ENCODE measurements at regions of chr13 and their contacts with region 1.

Region 1: DNA sequence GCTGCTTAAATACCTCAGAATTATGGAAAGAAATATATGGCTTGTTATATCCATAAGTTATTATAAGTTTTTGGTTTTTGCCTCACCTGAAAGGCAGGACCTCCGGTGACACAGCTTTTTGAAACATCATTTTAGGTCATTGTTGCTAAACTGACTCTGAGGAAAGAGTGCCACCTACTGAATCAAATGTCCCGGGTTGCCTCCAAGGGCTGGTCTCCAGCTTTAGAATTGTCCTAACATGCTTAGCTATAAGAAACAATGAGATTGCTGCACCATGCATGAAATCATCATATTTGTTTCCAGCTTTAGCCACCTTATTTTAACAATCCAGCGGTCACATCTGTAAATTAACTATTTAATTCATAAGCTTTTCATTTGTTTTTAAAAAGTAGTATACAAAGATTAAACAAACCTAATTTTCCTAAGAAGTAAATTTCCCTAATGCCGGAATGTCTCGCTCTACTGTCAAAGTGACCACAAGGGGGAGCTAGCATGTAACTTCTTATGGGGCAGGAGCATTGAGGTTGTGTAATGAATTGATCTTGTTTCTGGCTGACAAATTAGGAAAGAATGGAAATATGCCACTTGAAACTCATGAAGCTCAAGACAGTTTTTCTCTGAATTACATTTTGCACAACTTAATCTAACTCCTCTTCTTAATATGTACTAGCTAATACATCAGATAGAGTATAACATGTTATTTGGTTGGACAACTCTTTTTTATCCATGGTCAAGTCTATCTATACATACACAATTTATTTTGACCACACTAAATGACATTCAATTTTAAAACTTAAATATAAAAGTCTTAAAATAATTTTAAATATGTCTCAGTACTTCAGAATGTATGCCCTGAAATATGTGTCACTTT is 6.7 kb upstream of the PCDH17 start:
- DNase-seq: peak; percentile 84

Region 2: DNA sequence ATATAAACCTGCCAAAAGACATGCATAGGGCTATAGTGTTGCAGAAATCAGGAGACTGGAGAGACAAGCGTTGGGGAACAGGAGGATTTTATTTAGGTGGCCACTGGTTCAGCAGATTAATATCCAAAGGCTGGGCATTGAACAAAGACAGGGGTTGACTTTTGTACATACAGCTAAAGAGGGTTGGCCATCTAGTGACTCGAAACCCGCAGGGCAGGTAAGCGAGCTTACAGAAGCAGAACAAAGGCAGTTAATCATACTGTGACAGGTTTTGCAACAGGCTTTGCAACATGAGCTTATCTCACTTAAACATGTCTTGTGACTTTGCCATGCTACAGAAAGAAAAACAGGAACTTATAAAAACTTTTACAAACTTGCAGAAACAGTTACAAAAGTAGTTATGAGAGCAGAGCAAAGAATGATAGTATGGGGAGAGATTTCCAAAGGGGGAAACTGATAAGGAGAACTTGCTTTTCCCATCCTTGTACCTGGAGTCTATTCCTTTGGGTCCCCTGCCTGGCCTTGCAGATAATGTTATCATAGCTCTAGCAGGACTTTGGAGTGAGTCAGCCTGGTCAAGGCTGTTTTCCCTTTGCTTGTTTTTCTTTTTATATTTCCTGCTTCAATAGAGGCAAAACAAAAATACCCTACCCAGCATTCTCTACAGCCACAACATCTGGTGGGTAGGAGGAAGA is 240.9 kb after region 1 on chr13:
- in situ Hi-C with region 1: loop called (anchors 25 kb)
- DNase-seq: no peak